ENCODE measurements at regions of chr11 and their contacts with region 1.

Region 1: GRCh38 chr11:19660076-19660475 is 52.6 kb upstream of the NAV2 start:
- DNase-seq: no peak
- H3K4me3 ChIP-seq: no peak overlapping the region
- H3K27ac ChIP-seq: no peak overlapping the region
- H3K4me1 ChIP-seq: no peaks in the 10 kb centered on the region
- H3K27me3 ChIP-seq: no peaks in the 10 kb centered on the region
- CTCF ChIP-seq: no peak
- EP300 ChIP-seq: no peak
- POLR2A ChIP-seq: no peak
- RAD21 ChIP-seq: no peak

Region 2: DNA sequence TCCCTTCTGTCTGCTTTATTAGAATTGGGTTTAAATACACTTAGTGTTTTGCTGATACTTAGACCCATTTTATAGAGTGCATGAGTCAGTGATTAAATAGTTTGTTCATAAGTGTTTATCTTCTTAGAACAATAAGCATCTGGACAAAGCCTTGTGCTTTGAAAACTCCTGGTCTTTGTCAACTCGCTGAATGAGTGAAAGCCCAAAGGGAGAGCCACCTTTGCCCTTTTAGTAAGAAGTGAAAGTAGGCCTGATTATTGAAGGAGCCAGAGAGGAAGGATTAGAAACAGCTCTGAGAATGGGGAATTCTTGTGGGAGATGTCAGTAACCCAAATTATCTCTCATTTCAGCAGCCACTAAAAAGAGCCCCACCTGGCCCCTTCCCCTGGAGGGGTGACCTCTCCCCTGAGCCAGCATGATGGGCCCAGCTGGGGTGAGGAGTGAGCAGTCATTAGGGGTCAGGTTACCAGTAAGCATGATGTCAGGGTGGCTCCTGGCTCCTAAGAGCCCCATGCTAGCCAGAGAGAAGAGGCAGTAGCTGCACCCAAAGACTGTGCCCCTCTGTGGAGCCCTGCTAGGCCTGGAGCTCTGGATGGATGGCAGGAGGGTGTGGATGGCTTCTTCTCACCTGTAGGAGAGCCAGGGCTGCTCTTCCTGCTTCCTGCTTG is 294.2 kb before region 1 on chr11:
- CTCF ChIA-PET with region 1: no interaction called
- POLR2A ChIA-PET with region 1: no interaction called
- DNase-seq: no peak
- H3K4me3 ChIP-seq: no peak overlapping the region
- H3K27ac ChIP-seq: no peak overlapping the region
- H3K4me1 ChIP-seq: peaks cover 0 to 3% (median 2%) of the 10 kb centered on the region in 4 experiments; a peak in 4 of 7 replicates
- H3K27me3 ChIP-seq: no peaks in the 10 kb centered on the region
- CTCF ChIP-seq: no peak
- EP300 ChIP-seq: no peak
- POLR2A ChIP-seq: no peak
- RAD21 ChIP-seq: no peak

Region 3: GRCh38 chr11:19646921-19647320 is 13.2 kb before region 1 on chr11:
- CTCF ChIA-PET with region 1: interaction called, 23 read pairs
- POLR2A ChIA-PET with region 1: interaction called, 3 read pairs
- DNase-seq: no peak
- H3K4me3 ChIP-seq: no peak overlapping the region
- H3K27ac ChIP-seq: no peak overlapping the region
- H3K4me1 ChIP-seq: no peaks in the 10 kb centered on the region
- H3K27me3 ChIP-seq: no peaks in the 10 kb centered on the region
- CTCF ChIP-seq: no peak
- EP300 ChIP-seq: no peak
- POLR2A ChIP-seq: no peak
- RAD21 ChIP-seq: no peak

Region 4: GRCh38 chr11:19673924-19674729 is 14.1 kb after region 1 on chr11:
- CTCF ChIA-PET with region 1: interaction called, 27 read pairs
- POLR2A ChIA-PET with region 1: interaction called, 6 read pairs
- DNase-seq: peak in 1 of 2 experiments; percentile 54
- H3K4me3 ChIP-seq: no peak overlapping the region
- H3K27ac ChIP-seq: no peak overlapping the region
- H3K4me1 ChIP-seq: peaks cover 2 to 18% (median 13%) of the 10 kb centered on the region in 4 experiments; a peak in 5 of 7 replicates
- H3K27me3 ChIP-seq: peaks cover 0 to 2% (median 0%) of the 10 kb centered on the region in 4 experiments; a peak in 1 of 7 replicates
- CTCF ChIP-seq: no peak
- EP300 ChIP-seq: no peak
- POLR2A ChIP-seq: no peak
- RAD21 ChIP-seq: no peak